Activated CD4-positive, alpha-beta memory T cell treated with anti-CD3 and anti-CD28 coated beads for 36 hours (primary cell): ENCODE measurements at regions of chr22 and their contacts with region 1.

Region 1: GRCh38 chr22:20418211-20418788 is 19.3 kb downstream of the SCARF2 start:
- DNase-seq: peak; percentile 77
- H3K4me3 Mint-ChIP-seq: peak overlapping the region; percentile 40
- H3K27ac Mint-ChIP-seq: no peak overlapping the region
- H3K4me1 Mint-ChIP-seq: peaks cover 2% of the 10 kb centered on the region
- H3K27me3 Mint-ChIP-seq: peaks cover 3% of the 10 kb centered on the region

Region 2: DNA sequence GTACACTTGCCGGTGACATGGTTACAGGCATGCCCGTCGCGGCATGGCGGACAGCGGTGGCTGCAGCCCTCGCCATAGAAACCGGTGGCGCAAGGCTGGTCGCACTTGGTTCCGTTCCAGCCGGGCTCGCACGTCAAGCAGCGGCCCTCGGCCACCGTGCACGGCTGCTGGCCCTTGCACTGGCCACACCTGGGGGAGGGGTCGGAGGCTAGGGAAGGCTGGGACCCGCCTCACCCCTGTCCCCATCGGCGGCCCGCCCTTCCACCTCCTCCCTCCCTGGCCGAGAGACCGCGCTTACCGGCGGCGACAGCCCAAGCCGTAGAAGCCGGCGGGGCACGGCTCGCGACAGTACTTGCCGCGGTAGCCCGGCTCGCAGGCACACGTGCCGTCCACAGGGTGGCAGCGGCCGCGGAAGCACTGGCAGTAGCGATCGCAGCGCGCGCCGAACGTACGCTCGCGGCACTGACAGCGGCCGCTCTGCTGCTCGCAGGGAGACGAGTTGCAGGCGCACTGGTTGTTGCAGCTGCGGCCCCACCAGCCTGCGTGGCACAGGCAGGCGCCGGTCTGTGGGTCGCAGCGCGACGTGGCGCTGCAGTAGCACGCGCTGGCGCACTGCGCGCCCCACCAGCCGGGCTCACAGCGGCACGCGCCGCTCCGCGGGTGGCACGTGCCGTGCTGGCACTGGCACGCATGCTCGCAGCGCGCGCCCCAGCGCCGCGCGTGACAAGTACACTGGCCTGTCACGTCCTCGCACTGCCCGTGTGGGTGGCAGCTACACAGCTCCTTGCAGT is 12.6 kb after region 1 on chr22:
- CTCF ChIA-PET with region 1: interaction called, 20 read pairs
- POLR2A ChIA-PET with region 1: no interaction called
- intact Hi-C with region 1: no loop called
- DNase-seq: peak; percentile 71
- H3K4me3 Mint-ChIP-seq: peak overlapping the region; percentile 23
- H3K27ac Mint-ChIP-seq: no peak overlapping the region
- H3K4me1 Mint-ChIP-seq: peaks cover 15% of the 10 kb centered on the region
- H3K27me3 Mint-ChIP-seq: peaks cover 46% of the 10 kb centered on the region

Region 3: DNA sequence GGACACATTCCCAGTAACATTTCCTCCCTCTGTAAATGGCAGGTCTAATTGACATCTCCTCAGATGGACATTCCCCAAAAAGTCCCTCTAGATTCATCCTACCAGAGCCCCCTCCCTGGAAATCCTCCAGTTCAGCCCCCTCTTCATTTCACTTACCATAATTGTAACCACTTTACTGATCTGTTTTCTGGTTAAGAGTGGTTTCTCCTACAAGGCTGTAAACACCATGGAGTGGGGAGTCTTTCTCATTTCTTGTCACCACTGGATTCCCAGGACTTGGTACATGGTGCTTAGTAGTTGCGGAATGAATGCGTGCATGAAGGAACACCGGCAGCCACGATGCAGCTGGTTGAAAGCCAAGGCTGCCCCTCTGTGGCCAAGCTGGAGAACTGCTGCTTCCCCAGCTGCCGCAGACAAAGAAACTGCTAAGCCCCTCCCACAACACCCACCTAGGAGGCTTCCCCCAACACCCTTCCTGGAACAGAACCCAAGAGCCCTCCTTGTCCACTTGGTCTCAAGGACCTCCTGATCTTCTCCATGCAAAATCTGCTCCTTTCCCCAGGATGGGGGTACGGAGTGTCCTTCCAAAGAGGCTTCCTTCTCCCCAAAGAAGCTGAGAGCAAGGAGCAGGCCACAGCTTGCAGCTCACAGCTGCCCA is 37.9 kb after region 1 on chr22:
- CTCF ChIA-PET with region 1: interaction called, 92 read pairs
- POLR2A ChIA-PET with region 1: interaction called, 3 read pairs
- intact Hi-C with region 1: loop called (anchors 1 kb)
- DNase-seq: peak; percentile 85
- H3K4me3 Mint-ChIP-seq: no peak overlapping the region
- H3K27ac Mint-ChIP-seq: peak overlapping the region; percentile 38
- H3K4me1 Mint-ChIP-seq: peaks cover 18% of the 10 kb centered on the region
- H3K27me3 Mint-ChIP-seq: no peaks in the 10 kb centered on the region

Region 4: DNA sequence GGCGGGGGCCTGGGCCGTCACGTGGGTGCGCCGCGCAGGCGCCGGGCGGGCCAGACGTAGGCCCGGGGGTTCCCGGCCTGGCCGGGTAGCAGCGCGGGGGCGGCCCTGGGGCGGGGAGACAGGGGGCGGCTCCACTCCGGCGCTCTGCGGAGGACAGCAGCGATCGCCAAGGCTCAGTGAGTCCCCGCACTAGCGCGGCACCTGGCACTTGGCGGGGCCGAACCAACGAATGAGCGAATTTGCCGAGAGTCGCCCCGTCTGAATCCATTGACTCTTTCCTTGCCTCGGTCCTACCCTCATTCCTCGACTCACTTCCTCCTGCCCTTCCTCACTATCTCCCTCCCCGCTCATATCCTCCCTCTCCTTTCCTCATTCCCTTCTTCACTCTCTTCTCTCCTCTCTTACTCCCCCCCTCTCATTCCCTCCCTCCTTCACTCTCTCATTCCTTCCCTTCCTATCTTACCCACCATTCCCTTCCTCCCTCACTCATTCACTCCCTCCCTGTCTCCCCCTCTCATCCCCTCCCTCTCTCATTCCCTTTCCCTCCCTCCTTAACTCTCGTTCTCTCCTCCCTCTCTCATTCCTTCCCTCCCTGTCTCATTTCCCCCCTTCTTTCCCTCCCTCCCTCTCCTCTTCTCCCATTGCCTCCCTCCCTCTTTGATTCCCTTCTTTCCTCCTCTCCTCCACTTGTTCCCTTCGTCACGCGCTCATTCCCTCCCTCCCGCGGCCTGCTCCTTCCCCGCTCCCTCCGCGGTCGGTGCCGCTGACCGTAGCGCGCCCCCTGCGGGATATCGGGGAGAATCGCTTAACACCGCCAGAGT is 77.8 kb after region 1 on chr22:
- CTCF ChIA-PET with region 1: interaction called, 11 read pairs
- POLR2A ChIA-PET with region 1: no interaction called
- intact Hi-C with region 1: loop called (anchors 1 kb)
- DNase-seq: peak; percentile 95
- H3K4me3 Mint-ChIP-seq: peak overlapping the region; percentile 86
- H3K27ac Mint-ChIP-seq: peak overlapping the region; percentile 80
- H3K4me1 Mint-ChIP-seq: peaks cover 31% of the 10 kb centered on the region
- H3K27me3 Mint-ChIP-seq: no peaks in the 10 kb centered on the region

Region 5: DNA sequence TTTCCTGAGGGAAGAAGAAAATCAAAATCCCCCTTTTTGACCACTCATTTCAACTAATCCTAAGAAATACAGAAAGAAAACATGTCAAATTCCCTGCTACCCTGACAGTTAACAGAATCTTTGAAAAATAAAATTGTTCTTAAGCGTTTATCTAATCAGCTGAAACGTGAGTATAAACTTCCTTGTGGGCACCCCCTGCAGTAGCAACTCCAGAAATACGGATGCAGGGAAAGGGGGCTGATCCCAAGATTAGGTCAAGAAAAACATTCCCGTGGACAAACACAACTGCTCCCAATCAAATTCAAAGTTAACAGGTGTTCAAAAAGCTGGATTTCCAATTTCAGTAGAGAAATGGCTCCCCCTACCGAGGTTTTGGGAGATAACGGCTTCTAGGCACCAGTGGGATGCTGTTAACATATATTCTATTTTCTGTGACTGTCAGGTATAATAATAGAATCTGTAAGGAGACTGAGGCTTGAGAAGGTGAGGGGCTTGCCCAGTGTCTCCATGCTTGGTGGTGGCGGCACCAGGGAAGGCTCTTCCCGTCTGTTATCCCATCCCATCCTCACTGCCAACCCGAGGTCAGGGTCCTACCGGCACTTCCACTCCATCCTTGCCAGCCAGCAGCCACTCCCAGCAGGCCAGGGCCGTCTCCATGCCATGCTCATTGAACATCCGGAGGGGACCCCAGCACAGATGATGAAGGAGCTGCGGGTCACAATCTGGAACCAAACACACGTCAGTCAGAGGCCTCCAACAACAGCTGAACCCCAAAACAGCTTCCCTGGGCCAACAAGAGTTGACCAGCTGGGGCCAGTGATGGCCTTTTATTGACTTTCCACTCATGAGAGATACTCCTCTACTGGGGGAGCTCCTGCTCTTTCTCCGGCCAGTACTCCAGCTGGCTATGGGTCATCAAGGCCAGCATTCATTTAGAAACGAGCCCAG is 323.6 kb after region 1 on chr22:
- CTCF ChIA-PET with region 1: interaction called, 15 read pairs
- POLR2A ChIA-PET with region 1: no interaction called
- intact Hi-C with region 1: loop called (anchors 5 kb)
- DNase-seq: peak; percentile 50
- H3K4me3 Mint-ChIP-seq: no peak overlapping the region
- H3K27ac Mint-ChIP-seq: no peak overlapping the region
- H3K4me1 Mint-ChIP-seq: no peaks in the 10 kb centered on the region
- H3K27me3 Mint-ChIP-seq: no peaks in the 10 kb centered on the region